ENCODE measurements at regions of chr17 and their contacts with region 1.

Region 1: GRCh38 chr17:19377602-19378392 is 501 bp upstream of the MAPK7 start:
- DNase-seq: peak; percentile 99
- H3K4me3 ChIP-seq: peak overlapping the region; percentile 63 to 93 (median 76)
- H3K27ac ChIP-seq: peak overlapping the region; percentile 90 to 97 (median 96)
- H3K4me1 ChIP-seq: peaks cover 0 to 47% (median 34%) of the 10 kb centered on the region in 4 donors
- H3K27me3 ChIP-seq: no peaks in the 10 kb centered on the region
- CTCF ChIP-seq: no peak
- EP300 ChIP-seq: no peak
- POLR2A ChIP-seq: peak; percentile 60 to 63

Region 2: DNA sequence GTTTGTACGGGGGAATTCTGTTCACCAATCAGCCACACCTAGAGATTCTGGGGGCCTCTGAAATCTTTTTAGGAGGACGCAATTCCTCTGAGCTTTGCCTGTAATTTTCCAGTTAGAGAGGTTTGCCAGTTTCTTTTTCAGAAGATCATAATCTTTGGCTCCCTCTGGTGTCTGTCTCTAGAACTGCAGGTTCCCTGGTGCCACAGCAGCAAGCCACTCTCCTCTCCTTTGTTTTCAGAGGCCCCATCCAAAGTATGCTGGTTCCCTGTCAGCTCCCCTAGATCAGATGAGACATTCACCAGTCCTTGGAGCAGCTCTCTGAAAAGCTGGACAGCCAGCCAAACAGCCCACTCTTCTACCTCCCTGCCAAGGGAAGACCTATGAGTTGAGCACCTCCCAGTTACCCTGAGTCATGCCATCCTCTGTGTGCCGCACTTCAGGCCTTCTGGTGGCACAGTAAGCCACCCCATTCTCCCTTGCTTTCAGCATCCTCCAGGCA is 69.3 kb after region 1 on chr17:
- intact Hi-C with region 1: loop called (anchors 5 kb)
- DNase-seq: peak; percentile 90
- H3K4me3 ChIP-seq: no peak overlapping the region
- H3K27ac ChIP-seq: peak overlapping the region; percentile 83 to 94 (median 88)
- H3K4me1 ChIP-seq: peaks cover 0 to 37% (median 35%) of the 10 kb centered on the region in 4 donors
- H3K27me3 ChIP-seq: no peaks in the 10 kb centered on the region
- CTCF ChIP-seq: peak; percentile 95 to 99 (median 96)
- EP300 ChIP-seq: peak in 1 of 4 donors; percentile 0
- POLR2A ChIP-seq: no peak